IMR-90 (cell line): ENCODE measurements at regions of chr2 and their contacts with region 1.

Region 1: GRCh38 chr2:145752091-145752806 is 1232.3 kb upstream of the ZEB2 start:
- DNase-seq: peak; percentile 89
- ATAC-seq: peak; percentile 83
- H3K4me3 ChIP-seq: no peak overlapping the region
- H3K27ac ChIP-seq: peak overlapping the region; percentile 43; the same call in 1 of the 2 replicates
- H3K4me1 ChIP-seq: peaks cover 12% of the 10 kb centered on the region
- H3K27me3 ChIP-seq: no peaks in the 10 kb centered on the region
- CTCF ChIP-seq: peak; percentile 82
- POLR2A ChIP-seq: no peak
- RAD21 ChIP-seq: peak; percentile 90

Region 2: DNA sequence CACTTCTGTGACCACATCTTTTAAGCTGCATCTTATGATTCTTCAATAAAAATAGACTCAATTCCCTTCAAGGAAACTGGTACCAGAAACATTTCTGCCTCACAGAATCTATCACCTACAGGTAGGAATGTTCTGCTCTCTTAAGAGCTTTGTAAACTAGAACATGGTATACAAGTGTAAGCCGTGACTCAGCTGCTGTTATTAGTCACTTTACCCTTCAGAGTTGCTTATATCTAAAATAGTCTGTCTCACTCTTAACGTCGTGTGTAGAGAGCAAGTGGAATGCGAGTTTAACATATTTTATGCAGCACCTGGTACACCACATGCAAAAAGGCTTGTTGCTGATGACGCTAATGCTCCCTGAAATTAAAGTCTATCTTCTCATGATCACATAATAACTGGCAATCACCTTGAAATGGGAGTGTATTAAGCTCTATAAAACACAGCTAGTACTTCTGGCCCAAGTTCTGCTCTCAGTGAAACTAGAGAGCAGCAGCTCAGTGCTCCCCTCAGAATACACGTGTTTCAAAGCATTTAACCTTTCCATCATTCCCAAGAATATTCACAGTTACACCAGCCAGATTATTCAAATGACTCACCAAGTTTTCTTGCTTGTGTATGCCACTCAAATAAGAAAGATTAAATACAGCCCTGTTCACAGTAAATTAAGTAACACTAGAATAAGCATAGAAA is 1652.4 kb before region 1 on chr2:
- CTCF ChIA-PET with region 1: no interaction called
- POLR2A ChIA-PET with region 1: no interaction called
- dilution Hi-C with region 1: no loop called
- in situ Hi-C with region 1: no loop called
- intact Hi-C with region 1: loop called (anchors 10 kb)
- DNase-seq: peak; percentile 98
- ATAC-seq: peak; percentile 81
- H3K4me3 ChIP-seq: no peak overlapping the region
- H3K27ac ChIP-seq: peak overlapping the region; percentile 5; the same call in 1 of the 2 replicates
- H3K4me1 ChIP-seq: peaks cover 13% of the 10 kb centered on the region
- H3K27me3 ChIP-seq: no peaks in the 10 kb centered on the region
- CTCF ChIP-seq: peak; percentile 58
- POLR2A ChIP-seq: no peak
- RAD21 ChIP-seq: peak; percentile 47

Region 3: GRCh38 chr2:144524118-144524957 is 1227.9 kb before region 1 on chr2:
- CTCF ChIA-PET with region 1: no interaction called
- POLR2A ChIA-PET with region 1: no interaction called
- dilution Hi-C with region 1: no loop called
- in situ Hi-C with region 1: loop called (anchors 5 kb)
- intact Hi-C with region 1: loop called (anchors 1 kb)
- DNase-seq: no peak
- ATAC-seq: peak; percentile 55
- H3K4me3 ChIP-seq: peak overlapping the region; percentile 83
- H3K27ac ChIP-seq: peak overlapping the region; percentile 70
- H3K4me1 ChIP-seq: peaks cover 4% of the 10 kb centered on the region; the same call in 1 of the 2 replicates
- H3K27me3 ChIP-seq: no peaks in the 10 kb centered on the region
- CTCF ChIP-seq: no peak
- POLR2A ChIP-seq: no peak
- RAD21 ChIP-seq: no peak

Region 4: DNA sequence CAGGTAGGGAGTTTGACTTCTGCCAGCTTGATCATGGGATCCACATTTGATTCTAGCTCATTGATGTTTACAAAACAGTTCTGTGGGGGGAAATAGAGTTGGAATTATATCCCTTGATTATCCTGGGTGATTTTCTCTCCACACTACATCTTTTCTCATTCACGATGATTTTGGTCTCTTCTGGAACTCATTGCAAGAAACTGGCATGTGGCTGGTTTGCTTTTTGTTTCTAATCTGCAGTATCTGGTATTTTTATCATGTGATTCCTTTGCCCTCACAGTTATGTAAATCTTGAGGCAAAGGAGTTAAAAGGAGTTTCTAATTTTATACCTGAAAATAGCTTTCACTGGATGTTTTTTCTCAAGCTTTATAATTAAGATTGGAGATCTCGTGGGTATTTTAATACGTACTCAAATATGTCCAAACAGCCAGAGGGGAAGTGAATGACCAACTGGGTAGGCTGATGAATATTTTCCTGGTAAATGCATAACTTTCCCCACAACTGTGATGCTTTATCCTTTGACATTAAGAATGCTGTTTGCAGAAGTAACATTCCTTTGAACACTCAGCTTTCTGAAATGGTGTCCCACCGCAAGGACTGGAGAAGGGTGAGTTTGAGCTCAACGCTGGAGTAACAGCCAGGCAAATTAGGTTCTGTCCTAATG is 729.5 kb before region 1 on chr2:
- CTCF ChIA-PET with region 1: no interaction called
- POLR2A ChIA-PET with region 1: no interaction called
- dilution Hi-C with region 1: no loop called
- in situ Hi-C with region 1: no loop called
- intact Hi-C with region 1: loop called (anchors 10 kb)
- DNase-seq: peak; percentile 89
- ATAC-seq: peak; percentile 83
- H3K4me3 ChIP-seq: no peak overlapping the region
- H3K27ac ChIP-seq: peak overlapping the region; percentile 14; the same call in 1 of the 2 replicates
- H3K4me1 ChIP-seq: peaks cover 11% of the 10 kb centered on the region
- H3K27me3 ChIP-seq: no peaks in the 10 kb centered on the region
- CTCF ChIP-seq: no peak
- POLR2A ChIP-seq: no peak
- RAD21 ChIP-seq: 0 out of 2 replicates have a peak, but pooled peaks have one; percentile 11

Region 5: DNA sequence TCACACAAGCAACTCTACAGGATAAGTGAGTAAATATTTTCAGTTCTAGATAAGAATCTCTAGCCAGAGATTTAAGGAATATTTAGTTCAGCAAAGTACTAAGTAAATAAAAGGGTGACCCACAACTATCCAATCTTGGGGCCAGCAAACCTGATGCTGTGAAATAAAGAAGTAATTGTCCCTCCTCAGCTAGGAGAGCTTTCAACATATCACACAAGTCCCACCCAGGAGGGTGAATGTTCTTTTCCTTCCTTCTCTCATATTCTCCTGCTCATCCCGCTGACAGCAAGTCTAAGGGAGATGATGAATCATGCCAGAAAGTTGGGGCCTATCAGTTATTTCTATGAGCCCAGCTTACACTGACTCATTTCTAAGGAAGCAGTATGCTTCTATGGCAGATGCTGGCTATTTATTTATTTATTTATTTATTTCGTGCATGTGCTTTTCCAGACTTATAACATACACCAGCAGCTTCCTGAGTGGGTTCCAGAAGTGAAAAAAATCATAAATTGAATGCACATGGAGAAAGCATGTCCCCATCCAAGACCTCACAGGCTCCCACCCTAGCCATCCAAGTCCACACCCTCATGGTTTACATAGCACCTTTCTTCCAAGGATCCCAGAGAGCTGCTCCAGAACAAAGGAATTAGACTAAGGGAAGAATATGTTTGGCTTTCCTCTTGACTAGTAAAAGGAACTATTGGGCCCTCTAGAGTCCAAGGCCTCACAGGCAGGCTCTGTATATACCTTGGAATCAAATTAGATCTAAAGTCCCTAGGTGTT is 158.2 kb before region 1 on chr2:
- CTCF ChIA-PET with region 1: no interaction called
- POLR2A ChIA-PET with region 1: no interaction called
- dilution Hi-C with region 1: no loop called
- in situ Hi-C with region 1: no loop called
- intact Hi-C with region 1: loop called (anchors 5 kb)
- DNase-seq: peak; percentile 84
- ATAC-seq: peak; percentile 77
- H3K4me3 ChIP-seq: no peak overlapping the region
- H3K27ac ChIP-seq: no peak overlapping the region
- H3K4me1 ChIP-seq: peaks cover 2% of the 10 kb centered on the region; the same call in 1 of the 2 replicates
- H3K27me3 ChIP-seq: no peaks in the 10 kb centered on the region
- CTCF ChIP-seq: no peak; the same call in 1 of the 2 replicates
- POLR2A ChIP-seq: no peak
- RAD21 ChIP-seq: peak; percentile 21; the same call in 1 of the 2 replicates

Region 6: DNA sequence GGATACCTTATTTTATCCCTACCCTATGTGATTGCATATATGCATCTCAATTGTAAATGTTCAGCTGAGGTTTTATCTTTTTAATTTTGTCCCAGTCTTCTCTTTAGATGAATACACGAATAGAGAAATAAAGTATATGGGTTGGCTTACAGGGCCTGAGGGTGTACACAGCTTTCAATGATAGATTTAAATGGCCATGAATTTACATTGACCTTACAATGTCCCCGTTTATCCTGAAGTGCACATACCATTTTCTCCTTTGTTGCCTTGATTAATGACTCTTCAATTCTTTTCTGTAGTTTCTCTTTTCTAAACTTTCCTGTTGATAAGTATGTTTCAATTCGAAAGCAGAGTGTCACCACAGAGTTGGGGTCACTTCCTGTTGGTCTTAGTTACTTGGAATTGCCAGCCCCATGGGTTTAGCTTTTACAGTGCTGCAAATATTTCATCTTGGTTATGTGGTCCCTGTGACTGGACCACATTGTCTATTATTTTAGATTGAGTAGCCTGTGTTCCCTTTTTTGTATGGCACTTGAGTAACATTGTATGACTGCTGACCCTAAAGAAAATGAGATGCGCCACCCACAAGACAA is 476.3 kb after region 1 on chr2:
- CTCF ChIA-PET with region 1: no interaction called
- POLR2A ChIA-PET with region 1: no interaction called
- dilution Hi-C with region 1: no loop called
- in situ Hi-C with region 1: no loop called
- intact Hi-C with region 1: no loop called
- DNase-seq: no peak
- ATAC-seq: no peak
- H3K4me3 ChIP-seq: no peak overlapping the region
- H3K27ac ChIP-seq: no peak overlapping the region
- H3K4me1 ChIP-seq: 0 out of 2 replicates have a peak, but pooled peaks cover 2% of the 10 kb centered on the region
- H3K27me3 ChIP-seq: no peaks in the 10 kb centered on the region
- CTCF ChIP-seq: no peak
- POLR2A ChIP-seq: no peak
- RAD21 ChIP-seq: no peak

Region 7: GRCh38 chr2:146523196-146523595 is 770.9 kb after region 1 on chr2:
- CTCF ChIA-PET with region 1: no interaction called
- POLR2A ChIA-PET with region 1: no interaction called
- dilution Hi-C with region 1: no loop called
- in situ Hi-C with region 1: no loop called
- intact Hi-C with region 1: loop called (anchors 5 kb)
- DNase-seq: peak; percentile 9
- ATAC-seq: no peak
- H3K4me3 ChIP-seq: no peak overlapping the region
- H3K27ac ChIP-seq: no peak overlapping the region
- H3K4me1 ChIP-seq: no peaks in the 10 kb centered on the region
- H3K27me3 ChIP-seq: no peaks in the 10 kb centered on the region
- CTCF ChIP-seq: peak; percentile 39
- POLR2A ChIP-seq: no peak
- RAD21 ChIP-seq: peak; percentile 44